MCF 10A (cell line): ENCODE measurements at regions of chr13 and their contacts with region 1.

Region 1: GRCh38 chr13:21638319-21639282 is 32.3 kb upstream of the FGF9 start:
- DNase-seq: peak; percentile 52
- H3K4me3 Mint-ChIP-seq: no peak overlapping the region
- H3K27ac Mint-ChIP-seq: peak overlapping the region; percentile 47
- H3K4me1 Mint-ChIP-seq: peaks cover 20% of the 10 kb centered on the region
- H3K27me3 Mint-ChIP-seq: no peaks in the 10 kb centered on the region
- CTCF ChIP-seq: peak; percentile 62

Region 2: GRCh38 chr13:21579754-21580316 is 58.8 kb before region 1 on chr13:
- CTCF ChIA-PET with region 1: no interaction called
- POLR2A ChIA-PET with region 1: no interaction called
- intact Hi-C with region 1: no loop called
- DNase-seq: no peak
- H3K4me3 Mint-ChIP-seq: no peak overlapping the region
- H3K27ac Mint-ChIP-seq: no peak overlapping the region
- H3K4me1 Mint-ChIP-seq: no peaks in the 10 kb centered on the region
- H3K27me3 Mint-ChIP-seq: no peaks in the 10 kb centered on the region
- CTCF ChIP-seq: no peak

Region 3: DNA sequence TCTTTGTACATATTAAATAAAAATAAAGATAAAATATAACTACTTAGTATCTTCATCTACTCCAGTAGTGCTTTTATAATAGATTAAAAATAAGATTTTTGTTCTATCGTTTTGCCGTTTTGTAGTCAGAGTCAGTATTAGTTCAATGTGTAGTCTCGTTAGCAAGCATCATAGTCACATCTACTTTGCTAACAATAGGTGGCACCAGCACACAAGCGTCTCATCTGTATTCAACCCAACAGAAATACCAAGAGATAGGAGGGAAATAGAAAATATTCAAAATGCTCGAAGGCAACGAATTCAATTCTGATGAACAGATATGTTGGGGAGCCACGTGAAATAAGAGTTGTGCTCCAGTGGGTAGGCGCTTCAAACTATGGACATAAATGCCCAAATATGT is 13.2 kb before region 1 on chr13:
- CTCF ChIA-PET with region 1: interaction called, 30 read pairs
- POLR2A ChIA-PET with region 1: no interaction called
- intact Hi-C with region 1: no loop called
- DNase-seq: peak; percentile 65
- H3K4me3 Mint-ChIP-seq: no peak overlapping the region
- H3K27ac Mint-ChIP-seq: no peak overlapping the region
- H3K4me1 Mint-ChIP-seq: peaks cover 7% of the 10 kb centered on the region
- H3K27me3 Mint-ChIP-seq: no peaks in the 10 kb centered on the region
- CTCF ChIP-seq: no peak

Region 4: DNA sequence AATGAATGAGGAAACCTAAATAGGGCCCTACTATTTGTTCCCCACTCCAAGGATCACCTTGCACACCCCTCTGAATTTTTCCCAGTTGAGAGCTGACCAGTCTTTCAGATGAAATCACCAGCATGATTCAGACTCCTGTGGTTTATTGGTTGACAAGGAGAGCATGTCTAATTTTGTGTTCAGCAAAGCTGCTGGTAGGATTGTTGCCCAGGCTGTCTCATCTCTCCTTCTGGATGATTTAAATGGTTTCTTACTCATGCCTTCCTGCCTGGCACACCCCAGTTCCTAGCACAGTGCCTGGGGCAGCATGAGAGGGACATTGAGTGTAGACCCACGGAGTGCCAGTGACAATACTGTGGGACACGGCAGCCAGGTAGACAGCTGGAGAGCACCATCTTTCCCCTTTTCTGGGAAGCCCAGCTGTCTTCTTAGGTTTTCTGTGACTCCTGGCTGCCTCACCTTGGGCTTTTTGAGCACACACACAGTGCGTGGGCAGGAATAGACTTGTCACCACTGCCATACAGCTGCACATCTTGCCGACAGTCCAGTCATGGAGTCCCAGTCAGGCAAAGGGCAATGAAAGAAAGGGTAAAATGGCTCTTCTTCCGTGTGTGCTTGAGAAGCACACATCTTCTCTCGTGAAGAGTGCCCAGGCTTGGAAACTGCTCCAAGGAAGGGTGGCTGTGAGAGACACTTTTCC is 44.6 kb after region 1 on chr13:
- CTCF ChIA-PET with region 1: interaction called, 12 read pairs
- POLR2A ChIA-PET with region 1: interaction called, 5 read pairs
- intact Hi-C with region 1: no loop called
- DNase-seq: peak; percentile 73
- H3K4me3 Mint-ChIP-seq: no peak overlapping the region
- H3K27ac Mint-ChIP-seq: no peak overlapping the region
- H3K4me1 Mint-ChIP-seq: peaks cover 21% of the 10 kb centered on the region
- H3K27me3 Mint-ChIP-seq: no peaks in the 10 kb centered on the region
- CTCF ChIP-seq: no peak

Region 5: GRCh38 chr13:22278336-22278929 is 639.8 kb after region 1 on chr13:
- CTCF ChIA-PET with region 1: interaction called, 28 read pairs
- POLR2A ChIA-PET with region 1: interaction called, 4 read pairs
- intact Hi-C with region 1: loop called (anchors 1 kb)
- DNase-seq: no peak
- H3K4me3 Mint-ChIP-seq: no peak overlapping the region
- H3K27ac Mint-ChIP-seq: peak overlapping the region; percentile 10
- H3K4me1 Mint-ChIP-seq: peaks cover 6% of the 10 kb centered on the region
- H3K27me3 Mint-ChIP-seq: no peaks in the 10 kb centered on the region
- CTCF ChIP-seq: peak; percentile 62